ENCODE measurements at regions of chr14 and their contacts with region 1.

Region 1: DNA sequence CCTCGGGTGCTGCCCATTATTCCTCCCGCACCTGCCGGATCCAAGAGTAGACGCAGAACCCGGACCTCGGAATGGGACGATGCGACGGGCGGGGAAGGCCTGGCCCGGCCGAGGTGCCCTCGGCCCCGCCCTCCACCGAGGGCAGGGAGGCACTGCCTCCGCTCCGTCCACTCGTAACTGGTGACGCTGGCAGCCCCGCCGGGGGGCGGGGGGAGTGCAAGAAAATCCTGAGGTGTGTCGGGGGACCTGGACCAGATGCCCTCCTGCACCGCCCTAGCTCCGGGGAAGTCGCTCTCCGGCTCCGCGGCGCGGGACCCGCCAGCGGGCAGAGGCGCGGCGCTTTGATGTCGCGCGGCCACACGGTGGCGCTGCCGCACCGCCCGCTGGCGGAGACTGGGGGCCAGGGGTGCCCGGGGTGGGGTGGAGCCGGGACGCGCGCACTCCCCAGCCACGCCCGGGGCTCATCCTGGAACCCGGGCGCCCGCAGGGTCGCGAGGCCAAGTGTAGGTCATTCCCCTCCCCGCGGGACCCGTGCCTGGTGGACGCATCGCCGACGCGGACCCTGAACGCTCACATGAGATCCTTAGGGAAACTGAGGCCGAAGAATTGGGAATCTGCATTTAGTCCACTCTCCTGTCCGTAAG is 202.8 kb downstream of the TTC8 start:
- DNase-seq: peak; percentile 21
- ATAC-seq: peak; percentile 91
- H3K4me3 ChIP-seq: peak overlapping the region; percentile 69 to 82 (median 81)
- H3K27ac ChIP-seq: peak overlapping the region; percentile 35
- H3K4me1 ChIP-seq: peaks cover 37% of the 10 kb centered on the region
- H3K27me3 ChIP-seq: no peaks in the 10 kb centered on the region; a peak in 2 of 5 replicates
- CTCF ChIP-seq: peak; percentile 80
- EP300 ChIP-seq: no peak
- POLR2A ChIP-seq: no peak
- RAD21 ChIP-seq: peak; percentile 96

Region 2: DNA sequence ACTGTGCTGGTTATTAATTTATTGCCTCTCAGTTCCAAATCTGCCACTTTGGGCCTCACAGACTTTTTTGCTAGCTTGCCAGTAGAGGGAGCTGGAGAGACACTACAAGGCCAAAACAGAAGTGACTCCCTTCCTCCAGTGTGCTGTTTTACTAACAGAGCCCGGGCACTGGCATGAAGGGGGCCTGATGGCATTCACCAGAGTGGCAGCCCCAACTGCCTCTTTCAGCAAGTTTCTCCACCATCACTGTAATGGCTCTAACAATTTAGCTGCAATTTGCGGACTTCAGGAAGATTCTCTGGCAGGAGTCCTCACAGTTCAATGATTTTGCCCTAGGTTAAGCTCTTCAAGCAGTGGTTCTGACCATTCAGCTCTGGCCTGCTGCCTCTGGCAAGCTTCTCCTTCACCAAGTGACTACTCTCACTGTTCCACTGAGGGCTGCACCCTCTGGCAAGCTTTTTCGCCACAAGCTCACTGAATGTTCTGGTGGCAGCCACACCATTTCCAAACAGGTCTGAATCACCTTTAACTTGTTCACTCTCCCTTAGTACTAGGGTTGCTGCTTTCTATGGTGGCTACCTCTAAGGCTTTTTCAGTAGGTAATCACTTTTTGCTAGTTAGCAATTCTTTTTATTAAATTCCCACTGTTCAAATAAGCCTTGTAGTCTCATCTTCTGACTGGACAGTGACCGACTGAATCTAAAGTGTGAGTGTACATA is 359.5 kb before region 1 on chr14:
- CTCF ChIA-PET with region 1: no interaction called
- POLR2A ChIA-PET with region 1: no interaction called
- in situ Hi-C with region 1: no loop called
- intact Hi-C with region 1: no loop called
- DNase-seq: peak; percentile 70
- ATAC-seq: peak; percentile 87
- H3K4me3 ChIP-seq: no peak overlapping the region
- H3K27ac ChIP-seq: no peak overlapping the region
- H3K4me1 ChIP-seq: peaks cover 19% of the 10 kb centered on the region
- H3K27me3 ChIP-seq: no peaks in the 10 kb centered on the region
- CTCF ChIP-seq: peak; percentile 84
- EP300 ChIP-seq: no peak
- POLR2A ChIP-seq: no peak
- RAD21 ChIP-seq: peak; percentile 71

Region 3: GRCh38 chr14:89000007-89000942 is 26.9 kb before region 1 on chr14:
- CTCF ChIA-PET with region 1: no interaction called
- POLR2A ChIA-PET with region 1: no interaction called
- in situ Hi-C with region 1: no loop called
- intact Hi-C with region 1: no loop called
- DNase-seq: peak; percentile 29
- ATAC-seq: peak; percentile 36
- H3K4me3 ChIP-seq: no peak overlapping the region
- H3K27ac ChIP-seq: no peak overlapping the region
- H3K4me1 ChIP-seq: no peaks in the 10 kb centered on the region
- H3K27me3 ChIP-seq: peaks cover 0 to 2% of the 10 kb centered on the region in 2 experiments; a peak in 1 of 5 replicates
- CTCF ChIP-seq: no peak
- EP300 ChIP-seq: no peak
- POLR2A ChIP-seq: no peak
- RAD21 ChIP-seq: no peak

Region 4: DNA sequence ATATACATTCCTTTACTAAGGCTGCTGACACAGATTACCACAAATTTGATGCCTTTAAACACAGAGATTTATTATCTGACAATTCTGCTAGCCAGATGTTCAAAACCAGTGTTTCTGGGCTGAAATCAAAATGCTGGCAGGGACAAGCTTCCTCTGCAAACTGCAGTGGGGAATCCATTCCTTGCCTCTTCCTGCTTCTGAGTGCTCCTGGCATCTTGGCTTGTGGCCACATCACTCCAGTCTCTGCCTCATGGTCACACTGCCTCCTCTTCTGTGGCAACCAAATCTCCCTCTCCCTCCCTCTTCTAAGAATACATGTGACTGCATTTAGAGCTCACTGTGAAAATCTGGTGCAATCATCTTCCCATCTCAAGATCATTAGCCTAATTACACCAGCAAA is 33.0 kb after region 1 on chr14:
- CTCF ChIA-PET with region 1: no interaction called
- POLR2A ChIA-PET with region 1: no interaction called
- in situ Hi-C with region 1: no loop called
- intact Hi-C with region 1: no loop called
- DNase-seq: no peak
- ATAC-seq: no peak
- H3K4me3 ChIP-seq: no peak overlapping the region
- H3K27ac ChIP-seq: no peak overlapping the region
- H3K4me1 ChIP-seq: no peaks in the 10 kb centered on the region
- H3K27me3 ChIP-seq: peaks cover 0 to 10% of the 10 kb centered on the region in 2 experiments; a peak in 2 of 5 replicates
- CTCF ChIP-seq: no peak
- EP300 ChIP-seq: no peak
- POLR2A ChIP-seq: no peak
- RAD21 ChIP-seq: no peak

Region 5: DNA sequence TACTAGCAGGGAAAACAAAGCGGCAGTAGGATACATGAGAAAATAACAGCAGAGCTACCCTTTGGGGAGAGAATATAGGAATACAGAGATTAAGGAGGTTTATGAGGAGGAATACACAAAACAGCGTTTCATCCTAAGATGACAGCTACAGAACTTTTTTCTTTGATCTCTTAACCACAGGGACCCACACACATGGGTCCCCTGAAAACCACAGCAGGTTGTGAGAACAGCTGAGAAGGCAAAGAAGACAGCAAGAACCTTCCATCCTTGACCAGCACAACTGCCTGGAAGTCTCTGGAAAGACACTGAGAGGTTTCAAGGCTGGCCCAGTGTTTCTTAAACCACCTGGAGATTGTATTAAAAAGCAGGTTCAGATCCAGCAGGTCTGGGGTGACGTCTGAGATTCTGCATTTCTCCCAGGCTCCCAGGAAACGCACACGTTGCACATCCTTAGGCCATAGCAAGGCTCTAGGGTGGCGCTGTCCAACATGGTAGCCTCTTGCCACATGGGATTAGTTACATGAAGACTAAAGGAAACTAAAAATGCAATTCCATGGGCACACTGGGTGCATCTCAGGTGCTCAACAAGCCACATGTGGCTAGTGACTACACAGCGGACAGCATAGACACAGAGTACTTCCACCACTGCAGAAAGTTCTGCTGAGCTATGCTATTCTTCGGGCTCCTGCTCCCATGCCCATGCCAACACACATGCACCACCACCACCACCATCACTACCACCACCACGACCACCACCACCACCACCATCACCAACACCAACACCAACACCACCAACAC is 297.5 kb after region 1 on chr14:
- CTCF ChIA-PET with region 1: no interaction called
- POLR2A ChIA-PET with region 1: no interaction called
- in situ Hi-C with region 1: no loop called
- intact Hi-C with region 1: no loop called
- DNase-seq: no peak
- ATAC-seq: no peak
- H3K4me3 ChIP-seq: no peak overlapping the region
- H3K27ac ChIP-seq: no peak overlapping the region
- H3K4me1 ChIP-seq: peaks cover 40% of the 10 kb centered on the region
- H3K27me3 ChIP-seq: no peaks in the 10 kb centered on the region
- CTCF ChIP-seq: no peak
- EP300 ChIP-seq: no peak
- POLR2A ChIP-seq: no peak
- RAD21 ChIP-seq: no peak

Region 6: GRCh38 chr14:89767861-89768268 is 740.6 kb after region 1 on chr14:
- CTCF ChIA-PET with region 1: no interaction called
- POLR2A ChIA-PET with region 1: no interaction called
- in situ Hi-C with region 1: loop called (anchors 25 kb)
- intact Hi-C with region 1: loop called (anchors 5 kb)
- DNase-seq: peak; percentile 38
- ATAC-seq: peak; percentile 84
- H3K4me3 ChIP-seq: no peak overlapping the region
- H3K27ac ChIP-seq: no peak overlapping the region
- H3K4me1 ChIP-seq: peaks cover 33% of the 10 kb centered on the region
- H3K27me3 ChIP-seq: 0 out of 5 replicates have a peak, but pooled peaks cover 0 to 5% of the 10 kb centered on the region in 2 experiments
- CTCF ChIP-seq: peak; percentile 79
- EP300 ChIP-seq: no peak
- POLR2A ChIP-seq: no peak
- RAD21 ChIP-seq: peak; percentile 76